Activated naive CD4-positive, alpha-beta T cell treated with anti-CD3 and anti-CD28 coated beads for 36 hours (primary cell): ENCODE measurements at regions of chr12 and their contacts with region 1.

Region 1: GRCh38 chr12:98743347-98743953 is 98.4 kb downstream of the APAF1 start:
- DNase-seq: peak; percentile 60
- H3K4me3 Mint-ChIP-seq: no peak overlapping the region
- H3K27ac Mint-ChIP-seq: no peak overlapping the region
- H3K4me1 Mint-ChIP-seq: peaks cover 21% of the 10 kb centered on the region
- H3K27me3 Mint-ChIP-seq: peaks cover 22% of the 10 kb centered on the region

Region 2: GRCh38 chr12:98572010-98572409 is 171.4 kb before region 1 on chr12:
- CTCF ChIA-PET with region 1: interaction called, 3 read pairs
- intact Hi-C with region 1: loop called (anchors 2 kb)
- DNase-seq: no peak
- H3K4me3 Mint-ChIP-seq: no peak overlapping the region
- H3K27ac Mint-ChIP-seq: no peak overlapping the region
- H3K4me1 Mint-ChIP-seq: no peaks in the 10 kb centered on the region
- H3K27me3 Mint-ChIP-seq: peaks cover 2% of the 10 kb centered on the region

Region 3: DNA sequence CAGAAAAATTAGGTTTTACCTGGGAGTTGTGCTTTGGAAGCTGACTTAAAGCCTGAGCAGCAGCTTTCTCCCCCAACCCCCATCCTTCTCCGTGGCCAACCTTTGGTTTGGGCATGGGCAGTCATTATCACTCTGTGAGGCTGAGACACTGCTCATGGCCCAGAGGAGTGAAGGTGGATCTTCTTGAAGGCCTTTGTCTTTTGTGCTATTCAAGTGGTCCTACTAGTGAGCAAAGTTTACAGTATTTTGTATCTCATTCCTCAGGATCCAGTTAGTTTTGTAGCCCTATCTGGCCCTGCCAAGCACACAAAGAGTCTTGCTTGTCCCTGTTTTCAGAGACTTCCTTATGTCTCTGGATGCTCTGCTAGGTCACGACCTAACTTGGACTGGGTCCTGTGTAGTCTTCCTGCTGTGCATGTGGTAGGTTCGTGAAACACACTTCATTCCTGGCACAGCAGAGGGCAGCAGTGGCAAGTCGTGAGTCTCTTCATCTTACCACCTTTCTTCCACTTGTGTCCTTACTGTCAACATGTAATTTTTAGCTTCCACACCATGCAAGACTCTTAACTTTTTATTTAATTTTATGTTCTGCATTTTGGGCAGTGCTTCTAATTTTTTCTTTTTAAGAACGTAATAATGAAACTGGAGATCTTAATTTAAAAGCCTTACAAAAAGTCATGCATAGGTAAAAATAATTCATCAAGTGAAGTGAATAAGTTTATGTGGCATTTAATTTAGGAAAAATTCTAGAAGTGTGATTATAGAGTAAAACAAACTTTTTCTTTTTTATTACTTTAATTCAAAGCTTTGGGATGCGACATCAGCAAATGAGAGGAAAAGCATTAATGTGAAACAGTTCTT is 44.6 kb before region 1 on chr12:
- CTCF ChIA-PET with region 1: interaction called, 8 read pairs
- intact Hi-C with region 1: loop called (anchors 2 kb)
- DNase-seq: peak; percentile 68
- H3K4me3 Mint-ChIP-seq: no peak overlapping the region
- H3K27ac Mint-ChIP-seq: peak overlapping the region; percentile 13
- H3K4me1 Mint-ChIP-seq: peaks cover 5% of the 10 kb centered on the region
- H3K27me3 Mint-ChIP-seq: no peaks in the 10 kb centered on the region

Region 4: GRCh38 chr12:98725476-98726247 is 17.8 kb before region 1 on chr12:
- CTCF ChIA-PET with region 1: interaction called, 9 read pairs
- intact Hi-C with region 1: loop called (anchors 1 kb)
- DNase-seq: peak; percentile 77
- H3K4me3 Mint-ChIP-seq: no peak overlapping the region
- H3K27ac Mint-ChIP-seq: no peak overlapping the region
- H3K4me1 Mint-ChIP-seq: no peaks in the 10 kb centered on the region
- H3K27me3 Mint-ChIP-seq: no peaks in the 10 kb centered on the region

Region 5: DNA sequence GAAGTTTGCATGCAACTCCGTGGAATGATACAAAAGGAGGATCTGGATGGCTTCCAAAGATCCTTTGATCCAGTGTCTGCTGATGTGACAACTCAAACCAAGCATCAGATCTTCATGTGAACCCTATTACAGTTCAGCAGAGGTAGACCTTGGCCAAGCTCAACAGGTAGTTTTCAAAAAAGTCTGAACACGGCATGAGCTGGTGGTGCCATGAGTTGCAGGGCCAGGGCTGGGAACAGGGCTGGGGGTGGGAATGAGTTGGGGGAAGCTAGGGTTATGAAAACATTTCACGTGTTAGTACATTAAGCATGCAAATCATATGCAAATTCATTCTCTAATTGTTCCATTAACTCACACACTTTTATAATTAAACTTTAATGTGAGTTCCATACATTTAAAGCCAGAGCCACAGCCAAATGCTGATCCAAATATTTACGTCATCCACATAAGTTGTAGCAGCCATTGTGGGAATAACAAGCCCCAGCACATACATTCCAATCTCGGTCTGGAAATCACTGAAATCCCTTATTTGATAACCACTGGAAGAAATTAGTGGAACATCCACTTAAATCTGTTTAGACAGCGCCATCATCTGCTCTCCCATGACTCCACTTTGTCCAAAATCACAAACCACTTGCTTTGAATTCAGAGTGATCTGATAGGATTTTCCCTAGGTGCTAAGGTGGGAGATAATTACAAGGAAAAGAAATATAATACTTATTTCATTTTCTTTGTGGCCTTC is 60.2 kb after region 1 on chr12:
- CTCF ChIA-PET with region 1: no interaction called
- intact Hi-C with region 1: no loop called
- DNase-seq: no peak
- H3K4me3 Mint-ChIP-seq: no peak overlapping the region
- H3K27ac Mint-ChIP-seq: no peak overlapping the region
- H3K4me1 Mint-ChIP-seq: no peaks in the 10 kb centered on the region
- H3K27me3 Mint-ChIP-seq: peaks cover 11% of the 10 kb centered on the region

Region 6: GRCh38 chr12:98814254-98814653 is 70.8 kb after region 1 on chr12:
- CTCF ChIA-PET with region 1: no interaction called
- intact Hi-C with region 1: no loop called
- DNase-seq: no peak
- H3K4me3 Mint-ChIP-seq: no peak overlapping the region
- H3K27ac Mint-ChIP-seq: no peak overlapping the region
- H3K4me1 Mint-ChIP-seq: no peaks in the 10 kb centered on the region
- H3K27me3 Mint-ChIP-seq: peaks cover 15% of the 10 kb centered on the region